ENCODE measurements at regions of chr6 and their contacts with region 1.

Region 1: GRCh38 chr6:61809004-61809595 is 476.9 kb downstream of the KHDRBS2 start:
- DNase-seq: peak; percentile 2
- H3K4me3 ChIP-seq: no peak overlapping the region; a peak in 1 of 4 replicates
- H3K27ac ChIP-seq: no peak overlapping the region
- H3K4me1 ChIP-seq: no peaks in the 10 kb centered on the region
- H3K27me3 ChIP-seq: no peaks in the 10 kb centered on the region
- CTCF ChIP-seq: peak; percentile 71
- EP300 ChIP-seq: no peak
- RAD21 ChIP-seq: peak; percentile 66

Region 2: DNA sequence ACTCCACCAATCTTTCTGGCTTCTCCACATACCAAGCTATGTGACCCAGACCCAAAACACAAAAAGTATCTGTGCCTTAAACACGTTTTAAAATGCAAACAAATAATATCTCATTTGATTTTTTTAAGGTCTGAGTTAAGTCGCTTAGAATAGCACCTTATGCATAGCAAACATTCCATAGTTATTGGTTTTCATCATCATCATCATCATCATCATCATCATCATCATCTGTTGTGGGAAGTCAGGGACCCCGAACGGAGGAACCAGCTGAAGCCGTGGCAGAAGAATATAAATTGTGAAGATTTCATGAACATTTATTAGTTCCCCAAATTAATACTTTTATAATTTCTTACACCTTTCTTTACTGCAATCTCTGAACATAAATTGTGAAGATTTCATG is 147.6 kb after region 1 on chr6:
- CTCF ChIA-PET with region 1: no interaction called
- POLR2A ChIA-PET with region 1: no interaction called
- DNase-seq: no peak
- H3K4me3 ChIP-seq: no peak overlapping the region
- H3K27ac ChIP-seq: no peak overlapping the region
- H3K4me1 ChIP-seq: no peaks in the 10 kb centered on the region
- H3K27me3 ChIP-seq: no peaks in the 10 kb centered on the region
- CTCF ChIP-seq: no peak
- EP300 ChIP-seq: no peak
- RAD21 ChIP-seq: no peak

Region 3: GRCh38 chr6:62119401-62119800 is 310.3 kb after region 1 on chr6:
- CTCF ChIA-PET with region 1: no interaction called
- POLR2A ChIA-PET with region 1: no interaction called
- DNase-seq: no peak
- H3K4me3 ChIP-seq: no peak overlapping the region
- H3K27ac ChIP-seq: no peak overlapping the region
- H3K4me1 ChIP-seq: no peaks in the 10 kb centered on the region
- H3K27me3 ChIP-seq: no peaks in the 10 kb centered on the region
- CTCF ChIP-seq: no peak
- EP300 ChIP-seq: no peak
- RAD21 ChIP-seq: no peak

Region 4: DNA sequence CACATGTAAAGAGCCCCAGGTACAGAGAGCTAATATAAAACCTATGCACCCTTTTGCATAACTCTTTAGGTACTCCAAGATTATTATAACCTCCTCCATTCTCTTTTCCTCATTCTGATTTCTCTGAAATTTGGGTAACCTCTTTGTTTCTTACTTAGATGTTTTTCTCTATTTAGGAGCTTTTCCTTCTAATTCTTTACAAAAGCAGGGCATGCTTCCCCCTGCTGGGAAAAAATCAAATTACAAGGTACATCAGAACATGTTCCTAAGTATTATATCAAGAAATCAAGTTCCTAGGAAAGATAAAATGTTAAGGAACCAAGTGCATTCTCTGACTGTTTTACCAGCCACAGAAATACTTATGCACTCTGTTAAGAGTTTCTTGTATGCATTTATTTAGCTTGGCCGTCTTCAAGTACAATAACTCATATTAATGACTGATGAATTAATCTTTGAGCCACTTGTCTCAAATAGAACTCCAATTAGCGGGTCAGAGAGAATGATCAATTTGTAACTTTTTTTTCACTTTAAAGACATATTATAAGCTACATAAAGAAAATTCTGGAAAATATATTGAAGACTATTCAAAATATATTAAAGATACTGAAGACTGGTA is 474.8 kb after region 1 on chr6:
- CTCF ChIA-PET with region 1: interaction called, 16 read pairs
- POLR2A ChIA-PET with region 1: no interaction called
- DNase-seq: peak; percentile 23
- H3K4me3 ChIP-seq: no peak overlapping the region; a peak in 1 of 4 replicates
- H3K27ac ChIP-seq: no peak overlapping the region
- H3K4me1 ChIP-seq: no peaks in the 10 kb centered on the region
- H3K27me3 ChIP-seq: no peaks in the 10 kb centered on the region
- CTCF ChIP-seq: peak; percentile 70
- EP300 ChIP-seq: no peak
- RAD21 ChIP-seq: peak; percentile 32; the same call in 1 of the 2 replicates